B cell (primary cell): ENCODE measurements at regions of chr9 and their contacts with region 1.

Region 1: GRCh38 chr9:91207729-91208418 is 153.8 kb downstream of the AUH start:
- DNase-seq: peak; percentile 63
- ATAC-seq: peak; percentile 91
- H3K4me3 ChIP-seq: peak overlapping the region in 4 of 5 experiments; percentile 3 to 52 (median 10)
- H3K4me3 Mint-ChIP-seq: peak overlapping the region; percentile 86
- H3K27ac ChIP-seq: peak overlapping the region; percentile 73 to 80
- H3K27ac Mint-ChIP-seq: peak overlapping the region; percentile 93
- H3K4me1 ChIP-seq: peaks cover 23 to 27% of the 10 kb centered on the region in 2 donors
- H3K4me1 Mint-ChIP-seq: peaks cover 33% of the 10 kb centered on the region
- H3K27me3 ChIP-seq: no peaks in the 10 kb centered on the region
- H3K27me3 Mint-ChIP-seq: no peaks in the 10 kb centered on the region
- CTCF ChIP-seq: no peak

Region 2: DNA sequence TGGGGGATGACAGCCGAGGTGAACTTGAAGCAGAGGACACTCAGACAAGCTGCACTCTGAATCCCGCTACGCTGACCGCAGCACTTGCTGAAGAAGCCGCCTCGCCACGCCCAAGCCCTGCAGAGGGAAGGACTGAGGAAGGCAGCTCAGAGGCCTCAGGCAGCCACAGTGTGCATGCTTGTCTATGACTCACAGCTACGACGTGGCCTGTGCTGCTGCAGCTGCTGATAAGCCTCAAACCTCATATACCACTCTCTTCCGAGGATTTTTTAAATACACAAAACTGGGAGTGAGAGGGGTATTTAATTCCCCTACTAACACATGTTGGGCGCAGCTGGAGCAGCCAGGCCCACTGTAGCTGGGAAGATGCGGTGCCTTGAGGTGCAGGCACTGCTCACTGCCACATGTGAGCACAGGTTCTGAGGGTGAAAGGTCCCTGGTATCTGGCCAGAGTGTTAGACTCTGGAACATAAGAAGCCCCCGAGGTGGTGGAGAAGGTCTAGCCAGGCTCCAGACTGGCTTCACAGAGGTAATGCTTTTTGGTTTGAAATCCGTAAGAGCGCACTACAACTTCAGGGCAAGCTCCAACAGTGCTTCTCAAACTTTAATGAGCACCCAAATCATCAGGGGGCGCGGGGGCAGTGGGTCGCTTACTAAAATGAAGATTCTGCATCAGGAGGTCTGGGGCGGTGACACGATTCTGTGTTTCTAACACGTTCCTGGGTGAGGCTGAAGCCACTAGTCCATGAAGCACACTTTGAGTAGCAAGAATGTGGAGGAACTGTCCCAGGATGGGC is 43.0 kb before region 1 on chr9:
- CTCF ChIA-PET with region 1: no interaction called
- POLR2A ChIA-PET with region 1: no interaction called
- intact Hi-C with region 1: loop called (anchors 5 kb)
- DNase-seq: peak; percentile 34
- ATAC-seq: peak; percentile 52
- H3K4me3 ChIP-seq: no peak overlapping the region
- H3K4me3 Mint-ChIP-seq: peak overlapping the region; percentile 63
- H3K27ac ChIP-seq: peak overlapping the region in 1 of 2 donors; percentile 41
- H3K27ac Mint-ChIP-seq: peak overlapping the region; percentile 57
- H3K4me1 ChIP-seq: peaks cover 33 to 35% of the 10 kb centered on the region in 2 donors
- H3K4me1 Mint-ChIP-seq: peaks cover 35% of the 10 kb centered on the region
- H3K27me3 ChIP-seq: no peaks in the 10 kb centered on the region
- H3K27me3 Mint-ChIP-seq: no peaks in the 10 kb centered on the region
- CTCF ChIP-seq: no peak

Region 3: GRCh38 chr9:91174772-91175171 is 33.1 kb before region 1 on chr9:
- CTCF ChIA-PET with region 1: no interaction called
- POLR2A ChIA-PET with region 1: no interaction called
- intact Hi-C with region 1: loop called (anchors 2 kb)
- DNase-seq: peak; percentile 60
- ATAC-seq: peak; percentile 43
- H3K4me3 ChIP-seq: peak overlapping the region in 2 of 5 experiments; percentile 15 to 43
- H3K4me3 Mint-ChIP-seq: peak overlapping the region; percentile 37
- H3K27ac ChIP-seq: peak overlapping the region; percentile 8 to 72
- H3K27ac Mint-ChIP-seq: peak overlapping the region; percentile 5
- H3K4me1 ChIP-seq: peaks cover 24 to 30% of the 10 kb centered on the region in 2 donors
- H3K4me1 Mint-ChIP-seq: peaks cover 29% of the 10 kb centered on the region
- H3K27me3 ChIP-seq: no peaks in the 10 kb centered on the region
- H3K27me3 Mint-ChIP-seq: no peaks in the 10 kb centered on the region
- CTCF ChIP-seq: no peak

Region 4: GRCh38 chr9:91193658-91194391 is 14.0 kb before region 1 on chr9:
- CTCF ChIA-PET with region 1: interaction called, 5 read pairs
- POLR2A ChIA-PET with region 1: interaction called, 3 read pairs
- intact Hi-C with region 1: loop called (anchors 1 kb)
- DNase-seq: peak; percentile 76
- ATAC-seq: peak; percentile 69
- H3K4me3 ChIP-seq: peak overlapping the region; percentile 53 to 68 (median 58)
- H3K4me3 Mint-ChIP-seq: peak overlapping the region; percentile 92
- H3K27ac ChIP-seq: peak overlapping the region; percentile 35 to 77
- H3K27ac Mint-ChIP-seq: peak overlapping the region; percentile 88
- H3K4me1 ChIP-seq: peaks cover 27 to 46% of the 10 kb centered on the region in 2 donors
- H3K4me1 Mint-ChIP-seq: peaks cover 28% of the 10 kb centered on the region
- H3K27me3 ChIP-seq: no peaks in the 10 kb centered on the region
- H3K27me3 Mint-ChIP-seq: no peaks in the 10 kb centered on the region
- CTCF ChIP-seq: no peak